SK-N-SH (cell line): ENCODE measurements at regions of chr3 and their contacts with region 1.

Region 1: DNA sequence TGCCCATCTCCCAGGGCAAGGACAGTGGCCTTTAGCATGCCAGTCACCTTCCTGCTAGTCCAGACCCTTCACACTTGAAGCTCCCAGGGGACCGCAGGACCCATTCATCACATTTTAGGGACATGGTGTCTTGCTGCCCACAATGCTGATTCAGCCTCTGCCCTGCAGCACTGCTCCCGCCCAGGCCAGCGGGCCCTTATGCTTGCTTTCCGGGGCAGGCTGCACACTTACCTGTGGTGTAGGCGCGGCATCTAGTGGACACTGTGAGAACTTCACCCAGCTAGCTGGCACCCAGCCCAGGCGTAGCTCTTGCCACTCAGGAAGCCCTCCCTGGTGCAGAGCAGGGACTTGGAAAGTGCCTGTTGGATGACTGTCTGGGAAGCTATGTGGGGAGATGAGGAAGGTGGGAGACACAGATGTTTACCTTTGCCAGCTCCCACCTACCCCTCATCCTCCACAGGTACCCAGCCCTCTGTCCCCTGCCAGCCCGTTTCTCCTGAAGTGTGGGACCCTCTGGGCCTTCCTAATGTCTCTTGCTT is 26.2 kb upstream of the NR2C2 start:
- DNase-seq: peak; percentile 87
- H3K4me3 ChIP-seq: peak overlapping the region in 1 of 2 experiments; percentile 13; a peak in 1 of 4 replicates
- H3K27ac ChIP-seq: no peak overlapping the region
- H3K4me1 ChIP-seq: peaks cover 0 to 15% of the 10 kb centered on the region in 2 experiments; a peak in 1 of 4 replicates
- H3K27me3 ChIP-seq: peaks cover 4% of the 10 kb centered on the region; the same call in 1 of the 2 replicates
- CTCF ChIP-seq: peak; percentile 93
- EP300 ChIP-seq: no peak
- RAD21 ChIP-seq: peak; percentile 99

Region 2: GRCh38 chr3:14633819-14634424 is 287.2 kb before region 1 on chr3:
- CTCF ChIA-PET with region 1: interaction called, 18 read pairs
- POLR2A ChIA-PET with region 1: no interaction called
- DNase-seq: peak; percentile 59
- H3K4me3 ChIP-seq: peak overlapping the region in 1 of 2 experiments; percentile 54; a peak in 1 of 4 replicates
- H3K27ac ChIP-seq: no peak overlapping the region
- H3K4me1 ChIP-seq: peaks cover 0 to 8% of the 10 kb centered on the region in 2 experiments; a peak in 1 of 4 replicates
- H3K27me3 ChIP-seq: no peaks in the 10 kb centered on the region
- CTCF ChIP-seq: peak; percentile 78
- EP300 ChIP-seq: no peak
- RAD21 ChIP-seq: peak; percentile 60

Region 3: DNA sequence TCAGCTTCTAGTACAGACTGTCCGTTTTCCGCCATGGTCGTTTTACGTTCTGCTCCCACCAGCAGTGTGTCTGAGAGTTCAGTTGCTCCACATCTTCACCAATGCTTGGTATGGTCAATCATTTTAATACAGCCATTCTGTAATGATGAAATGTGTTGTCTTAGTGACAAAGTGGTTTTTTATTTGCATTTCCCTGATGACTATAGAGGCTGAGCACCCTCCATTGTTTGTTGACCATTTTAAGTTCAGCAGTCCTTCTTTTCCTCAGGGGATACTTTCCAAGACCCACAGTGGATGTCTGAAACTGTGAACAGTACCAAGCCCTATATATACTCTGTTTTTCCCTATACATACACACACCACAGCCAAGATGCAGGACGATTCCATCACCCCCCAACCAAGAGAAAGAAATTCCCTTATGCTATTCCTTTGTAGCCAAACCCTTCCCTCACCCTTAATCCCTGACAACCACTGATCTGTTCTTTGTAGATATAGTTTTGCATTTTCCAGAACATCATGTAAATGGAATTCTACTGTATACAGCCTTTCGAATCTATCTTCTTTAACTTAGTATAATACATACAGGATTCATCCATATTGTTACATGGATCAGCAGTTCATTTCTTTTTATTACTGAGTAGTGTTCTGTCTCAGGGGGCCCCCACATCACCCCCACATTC is 190.3 kb before region 1 on chr3:
- CTCF ChIA-PET with region 1: no interaction called
- POLR2A ChIA-PET with region 1: no interaction called
- DNase-seq: no peak
- H3K4me3 ChIP-seq: no peak overlapping the region
- H3K27ac ChIP-seq: no peak overlapping the region
- H3K4me1 ChIP-seq: no peaks in the 10 kb centered on the region
- H3K27me3 ChIP-seq: no peaks in the 10 kb centered on the region
- CTCF ChIP-seq: no peak
- EP300 ChIP-seq: no peak
- RAD21 ChIP-seq: no peak

Region 4: GRCh38 chr3:14780927-14781507 is 140.1 kb before region 1 on chr3:
- CTCF ChIA-PET with region 1: interaction called, 30 read pairs
- POLR2A ChIA-PET with region 1: no interaction called
- DNase-seq: no peak
- H3K4me3 ChIP-seq: no peak overlapping the region; a peak in 1 of 4 replicates
- H3K27ac ChIP-seq: no peak overlapping the region
- H3K4me1 ChIP-seq: peaks cover 0 to 15% of the 10 kb centered on the region in 2 experiments; a peak in 1 of 4 replicates
- H3K27me3 ChIP-seq: no peaks in the 10 kb centered on the region
- CTCF ChIP-seq: peak; percentile 34; the same call in 1 of the 2 replicates
- EP300 ChIP-seq: no peak
- RAD21 ChIP-seq: peak; percentile 70

Region 5: DNA sequence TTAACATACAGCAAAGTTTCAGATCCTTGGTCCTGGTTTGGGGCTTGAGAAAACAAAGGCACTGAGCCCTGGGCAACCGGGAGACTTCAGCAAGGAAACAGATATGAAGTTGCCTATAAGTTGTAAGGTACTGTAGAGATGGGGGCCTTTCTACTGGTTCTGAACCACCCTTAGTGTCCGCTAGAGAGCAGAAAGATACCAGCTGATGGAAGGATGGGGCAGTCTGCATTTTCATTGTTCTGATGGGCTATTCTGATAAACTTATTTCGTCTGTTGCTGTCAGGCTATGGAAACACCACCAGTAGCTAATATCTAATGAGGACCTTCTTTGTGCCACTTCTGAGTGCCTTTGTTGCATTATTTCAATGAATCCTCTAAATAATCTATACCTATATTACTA is 63.6 kb before region 1 on chr3:
- CTCF ChIA-PET with region 1: interaction called, 60 read pairs
- POLR2A ChIA-PET with region 1: no interaction called
- DNase-seq: peak; percentile 59
- H3K4me3 ChIP-seq: no peak overlapping the region
- H3K27ac ChIP-seq: no peak overlapping the region
- H3K4me1 ChIP-seq: peaks cover 0 to 6% of the 10 kb centered on the region in 2 experiments; a peak in 1 of 4 replicates
- H3K27me3 ChIP-seq: no peaks in the 10 kb centered on the region; the same call in 1 of the 2 replicates
- CTCF ChIP-seq: 0 out of 2 replicates have a peak, but pooled peaks have one; percentile 8
- EP300 ChIP-seq: no peak
- RAD21 ChIP-seq: peak; percentile 81

Region 6: GRCh38 chr3:14947886-14948555 is 26.9 kb after region 1 on chr3:
- CTCF ChIA-PET with region 1: interaction called, 13 read pairs
- POLR2A ChIA-PET with region 1: interaction called, 3 read pairs
- DNase-seq: peak; percentile 99
- H3K4me3 ChIP-seq: peak overlapping the region; percentile 92 to 95
- H3K27ac ChIP-seq: peak overlapping the region; percentile 99 to 100
- H3K4me1 ChIP-seq: peaks cover 0 to 19% of the 10 kb centered on the region in 2 experiments; a peak in 3 of 4 replicates
- H3K27me3 ChIP-seq: no peaks in the 10 kb centered on the region
- CTCF ChIP-seq: no peak
- EP300 ChIP-seq: no peak
- RAD21 ChIP-seq: no peak

Region 7: GRCh38 chr3:15108082-15108545 is 187.0 kb after region 1 on chr3:
- CTCF ChIA-PET with region 1: interaction called, 12 read pairs
- POLR2A ChIA-PET with region 1: no interaction called
- DNase-seq: peak; percentile 86
- H3K4me3 ChIP-seq: no peak overlapping the region
- H3K27ac ChIP-seq: no peak overlapping the region
- H3K4me1 ChIP-seq: peaks cover 0 to 2% of the 10 kb centered on the region in 2 experiments; a peak in 1 of 4 replicates
- H3K27me3 ChIP-seq: no peaks in the 10 kb centered on the region; the same call in 1 of the 2 replicates
- CTCF ChIP-seq: peak; percentile 84
- EP300 ChIP-seq: no peak
- RAD21 ChIP-seq: peak; percentile 82

Region 8: GRCh38 chr3:15268033-15268631 is 347.0 kb after region 1 on chr3:
- CTCF ChIA-PET with region 1: no interaction called
- POLR2A ChIA-PET with region 1: no interaction called
- DNase-seq: peak; percentile 86
- H3K4me3 ChIP-seq: peak overlapping the region in 1 of 2 experiments; percentile 21; a peak in 1 of 4 replicates
- H3K27ac ChIP-seq: no peak overlapping the region; a peak in 1 of 4 replicates
- H3K4me1 ChIP-seq: peaks cover 0 to 20% of the 10 kb centered on the region in 2 experiments; a peak in 3 of 4 replicates
- H3K27me3 ChIP-seq: no peaks in the 10 kb centered on the region
- CTCF ChIP-seq: peak; percentile 97
- EP300 ChIP-seq: no peak
- RAD21 ChIP-seq: peak; percentile 99